IMR-90 (cell line): ENCODE measurements at regions of chr20 and their contacts with region 1.

Region 1: DNA sequence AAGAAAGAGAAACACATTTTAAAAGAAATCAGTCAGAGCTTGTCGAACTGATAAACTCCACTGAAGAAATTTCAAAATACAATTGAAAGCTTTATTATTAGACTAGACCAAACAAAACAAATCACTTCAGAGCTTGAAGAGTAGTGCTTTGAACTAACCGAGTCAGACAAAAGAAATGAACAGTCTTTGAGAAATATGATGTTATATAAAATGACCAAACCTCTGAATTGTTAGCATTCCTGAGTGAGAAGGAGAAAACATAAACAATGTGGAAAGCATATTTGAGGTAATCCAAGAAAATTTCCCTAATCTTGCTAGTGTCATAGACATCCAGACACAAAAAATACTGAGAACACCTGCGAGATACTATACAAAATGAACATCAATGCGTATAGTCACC is 13.2 kb upstream of the CST4 start:
- DNase-seq: peak; percentile 2
- ATAC-seq: no peak; the same call in 1 of the 2 replicates
- H3K4me3 ChIP-seq: no peak overlapping the region
- H3K27ac ChIP-seq: no peak overlapping the region
- H3K4me1 ChIP-seq: no peaks in the 10 kb centered on the region
- H3K27me3 ChIP-seq: peaks cover 15% of the 10 kb centered on the region
- CTCF ChIP-seq: no peak
- POLR2A ChIP-seq: no peak
- RAD21 ChIP-seq: no peak

Region 2: GRCh38 chr20:22675341-22675740 is 1026.7 kb before region 1 on chr20:
- CTCF ChIA-PET with region 1: no interaction called
- POLR2A ChIA-PET with region 1: no interaction called
- dilution Hi-C with region 1: no loop called
- in situ Hi-C with region 1: no loop called
- intact Hi-C with region 1: no loop called
- DNase-seq: no peak
- ATAC-seq: no peak
- H3K4me3 ChIP-seq: no peak overlapping the region
- H3K27ac ChIP-seq: no peak overlapping the region
- H3K4me1 ChIP-seq: no peaks in the 10 kb centered on the region
- H3K27me3 ChIP-seq: no peaks in the 10 kb centered on the region; the same call in 1 of the 2 replicates
- CTCF ChIP-seq: no peak
- POLR2A ChIP-seq: no peak
- RAD21 ChIP-seq: no peak

Region 3: DNA sequence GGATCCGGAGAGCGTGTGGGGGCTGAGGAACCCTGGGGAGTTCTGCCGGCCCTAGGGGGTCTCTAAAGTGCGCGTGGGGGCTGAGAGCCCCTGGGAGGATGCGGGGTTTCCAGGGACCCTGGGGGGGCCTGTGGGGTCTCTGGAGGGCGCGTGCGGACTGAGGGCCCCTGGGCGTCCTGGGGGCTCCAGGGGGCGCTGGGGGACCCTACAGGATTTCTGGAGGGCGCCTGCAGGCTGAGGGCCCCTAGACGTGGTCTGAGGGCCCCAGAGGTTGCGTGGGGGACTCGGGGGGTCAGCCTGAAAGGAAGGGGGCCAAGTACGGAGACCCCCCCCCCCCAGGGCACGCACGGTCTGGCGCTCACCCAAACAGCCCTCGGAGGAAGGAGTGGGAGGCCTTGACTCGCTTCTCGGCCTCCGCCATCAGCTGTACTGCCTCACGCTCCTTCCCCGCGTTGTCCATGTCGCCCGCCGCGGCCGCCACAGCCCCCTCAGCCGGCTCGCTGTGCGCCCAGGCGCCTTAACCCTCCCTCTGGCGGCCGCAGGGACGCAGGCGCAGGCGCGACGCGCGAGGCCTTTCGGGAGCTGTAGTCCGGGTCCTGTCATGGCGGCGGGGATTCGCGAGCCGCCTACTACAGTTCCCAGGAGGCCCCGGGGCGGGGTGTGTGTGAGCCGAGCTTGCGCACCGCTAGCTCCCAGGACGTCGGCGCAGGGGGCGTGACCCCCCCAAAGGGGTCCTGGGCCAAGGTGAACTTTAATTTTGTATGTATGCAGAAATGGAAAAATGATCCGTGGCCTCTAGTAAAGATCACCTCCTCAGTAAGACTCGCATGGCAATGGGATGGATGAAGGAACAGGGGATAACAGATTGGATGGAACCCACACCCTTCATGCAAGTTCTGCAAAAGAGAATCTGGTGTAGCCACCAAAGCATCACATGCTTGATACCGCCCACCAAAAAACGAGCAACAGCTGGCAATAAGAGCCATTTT is 280.8 kb before region 1 on chr20 and contains the start of gene NAPB:
- CTCF ChIA-PET with region 1: no interaction called
- POLR2A ChIA-PET with region 1: no interaction called
- dilution Hi-C with region 1: no loop called
- in situ Hi-C with region 1: no loop called
- intact Hi-C with region 1: no loop called
- DNase-seq: peak; percentile 88
- ATAC-seq: peak; percentile 99
- H3K4me3 ChIP-seq: peak within 1 kb of the TSS; percentile 67
- H3K27ac ChIP-seq: peak within 1 kb of the TSS; percentile 75
- H3K4me1 ChIP-seq: peaks cover 1% of the 10 kb centered on the region; the same call in 1 of the 2 replicates
- H3K27me3 ChIP-seq: no peaks in the 10 kb centered on the region
- CTCF ChIP-seq: peak; percentile 37
- POLR2A ChIP-seq: peak; percentile 63
- RAD21 ChIP-seq: peak; percentile 26; the same call in 1 of the 2 replicates
- total RNA-seq, gene NAPB: 3.9 and 5.2 TPM in 2 replicates

Region 4: DNA sequence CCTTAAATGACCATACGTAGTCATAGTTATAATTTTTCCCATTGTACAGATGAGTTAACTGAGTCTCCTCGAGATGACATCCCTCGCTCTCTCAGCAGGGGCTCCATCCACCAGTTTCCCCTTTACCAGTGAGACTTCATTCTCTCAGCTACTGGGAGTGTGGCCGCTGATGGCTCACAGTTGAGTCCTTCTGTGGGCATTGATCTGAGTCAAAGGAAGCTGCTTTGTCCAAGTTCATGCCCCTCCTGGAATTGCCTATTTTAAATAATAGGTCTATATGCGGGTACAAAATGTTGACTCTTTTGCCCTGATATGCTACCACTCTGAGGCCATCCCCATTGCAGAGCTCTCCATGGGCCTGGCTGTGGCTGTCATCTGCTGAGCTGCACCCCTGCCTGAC is 63.6 kb after region 1 on chr20:
- CTCF ChIA-PET with region 1: no interaction called
- POLR2A ChIA-PET with region 1: no interaction called
- dilution Hi-C with region 1: no loop called
- in situ Hi-C with region 1: no loop called
- intact Hi-C with region 1: loop called (anchors 10 kb)
- DNase-seq: no peak
- ATAC-seq: no peak
- H3K4me3 ChIP-seq: no peak overlapping the region
- H3K27ac ChIP-seq: no peak overlapping the region
- H3K4me1 ChIP-seq: no peaks in the 10 kb centered on the region
- H3K27me3 ChIP-seq: peaks cover 2% of the 10 kb centered on the region
- CTCF ChIP-seq: no peak
- POLR2A ChIP-seq: no peak
- RAD21 ChIP-seq: no peak